Dendritic cell treated with granulocyte-macrophage colony-stimulating factor and Interleukin-4, amounts not matched to agents 40 ng/mL and 50 ng/mL, for 4 days (primary cell): ENCODE measurements at regions of chr19 and their contacts with region 1.

Region 1: GRCh38 chr19:55503502-55504251 is 15.4 kb downstream of the SSC5D start:
- H3K4me3 Mint-ChIP-seq: peak overlapping the region; percentile 71
- H3K27ac Mint-ChIP-seq: peak overlapping the region; percentile 87
- H3K4me1 Mint-ChIP-seq: peaks cover 19% of the 10 kb centered on the region
- H3K27me3 Mint-ChIP-seq: peaks cover 25% of the 10 kb centered on the region

Region 2: DNA sequence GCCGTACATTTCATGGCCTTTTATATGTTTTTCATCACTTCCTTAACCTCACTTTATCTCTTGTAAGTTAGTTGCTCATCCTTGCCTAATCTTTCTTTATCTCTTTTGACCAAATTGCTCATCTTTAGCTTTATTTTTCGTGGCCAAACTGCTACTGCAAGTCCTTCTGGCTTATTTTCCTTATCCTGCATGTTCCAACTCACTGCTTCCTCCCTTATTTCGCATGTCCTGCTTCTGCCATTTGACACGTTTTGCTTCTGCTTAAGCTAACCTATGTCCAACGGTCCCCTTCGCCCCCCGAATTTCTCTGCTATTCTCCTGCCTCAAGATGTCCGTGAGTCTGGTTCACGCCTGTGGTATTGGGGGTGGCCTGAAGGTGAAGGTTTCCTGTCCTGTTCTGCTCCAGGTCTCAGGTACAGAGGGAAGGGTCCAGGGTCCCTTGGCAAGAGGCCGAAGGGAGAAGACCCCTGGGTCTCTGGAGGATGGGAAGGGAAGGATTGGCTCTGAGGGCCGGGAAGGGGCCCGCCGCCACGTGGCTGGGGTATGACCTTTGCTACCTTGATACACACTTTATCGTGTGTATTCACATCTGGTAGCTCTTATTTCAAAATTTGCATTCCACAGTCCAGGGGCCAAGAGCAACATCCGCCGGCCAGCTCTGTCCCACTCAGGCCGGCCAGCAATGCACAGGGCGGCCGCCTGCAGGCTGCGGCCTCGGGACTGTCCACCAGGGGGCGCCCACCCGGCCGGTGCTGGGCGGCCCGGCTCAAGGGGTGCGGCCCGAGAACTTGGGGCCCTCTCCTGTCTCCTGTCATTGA is 36.2 kb before region 1 on chr19:
- intact Hi-C with region 1: loop called (anchors 1 kb)
- H3K4me3 Mint-ChIP-seq: no peak overlapping the region
- H3K27ac Mint-ChIP-seq: peak overlapping the region; percentile 13
- H3K4me1 Mint-ChIP-seq: peaks cover 6% of the 10 kb centered on the region
- H3K27me3 Mint-ChIP-seq: peaks cover 19% of the 10 kb centered on the region

Region 3: GRCh38 chr19:55516878-55517620 is 13.4 kb after region 1 on chr19:
- intact Hi-C with region 1: no loop called
- H3K4me3 Mint-ChIP-seq: peak overlapping the region; percentile 76
- H3K27ac Mint-ChIP-seq: peak overlapping the region; percentile 93
- H3K4me1 Mint-ChIP-seq: peaks cover 6% of the 10 kb centered on the region
- H3K27me3 Mint-ChIP-seq: peaks cover 21% of the 10 kb centered on the region

Region 4: GRCh38 chr19:55536951-55537740 is 33.5 kb after region 1 on chr19 and contains the start of gene SBK2:
- intact Hi-C with region 1: no loop called
- H3K4me3 Mint-ChIP-seq: no peak within 1 kb of the TSS
- H3K27ac Mint-ChIP-seq: peak within 1 kb of the TSS; percentile 36
- H3K4me1 Mint-ChIP-seq: peaks cover 12% of the 10 kb centered on the region
- H3K27me3 Mint-ChIP-seq: peaks cover 11% of the 10 kb centered on the region

Region 5: DNA sequence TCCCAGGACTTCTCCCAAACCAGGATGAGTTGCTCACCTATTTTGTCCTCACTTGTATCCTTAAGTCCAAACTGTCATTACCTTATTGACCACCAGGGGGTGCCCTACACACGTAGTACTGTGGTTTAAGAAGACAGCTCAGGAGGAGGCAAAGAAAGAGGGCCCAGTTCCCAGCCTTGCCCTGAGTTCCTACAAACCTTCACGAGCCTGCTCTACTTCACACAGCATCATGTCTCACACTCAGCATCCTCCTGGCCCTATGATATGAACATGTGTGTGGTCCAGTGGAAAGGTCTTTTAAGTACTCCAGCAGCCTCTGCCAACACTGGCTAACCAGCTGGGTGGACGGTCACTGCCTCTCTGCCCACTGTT is 128.8 kb after region 1 on chr19:
- intact Hi-C with region 1: no loop called
- H3K4me3 Mint-ChIP-seq: no peak overlapping the region
- H3K27ac Mint-ChIP-seq: peak overlapping the region; percentile 38
- H3K4me1 Mint-ChIP-seq: peaks cover 37% of the 10 kb centered on the region
- H3K27me3 Mint-ChIP-seq: no peaks in the 10 kb centered on the region

Region 6: GRCh38 chr19:55647732-55648589 is 144.3 kb after region 1 on chr19 and contains the start of gene CCDC106:
- intact Hi-C with region 1: no loop called
- H3K4me3 Mint-ChIP-seq: peak within 1 kb of the TSS; percentile 93
- H3K27ac Mint-ChIP-seq: peak within 1 kb of the TSS; percentile 83
- H3K4me1 Mint-ChIP-seq: peaks cover 65% of the 10 kb centered on the region
- H3K27me3 Mint-ChIP-seq: peaks cover 4% of the 10 kb centered on the region